Activated naive CD4-positive, alpha-beta T cell treated with anti-CD3 and anti-CD28 coated beads for 36 hours (primary cell): ENCODE measurements at regions of chr1 and their contacts with region 1.

Region 1: DNA sequence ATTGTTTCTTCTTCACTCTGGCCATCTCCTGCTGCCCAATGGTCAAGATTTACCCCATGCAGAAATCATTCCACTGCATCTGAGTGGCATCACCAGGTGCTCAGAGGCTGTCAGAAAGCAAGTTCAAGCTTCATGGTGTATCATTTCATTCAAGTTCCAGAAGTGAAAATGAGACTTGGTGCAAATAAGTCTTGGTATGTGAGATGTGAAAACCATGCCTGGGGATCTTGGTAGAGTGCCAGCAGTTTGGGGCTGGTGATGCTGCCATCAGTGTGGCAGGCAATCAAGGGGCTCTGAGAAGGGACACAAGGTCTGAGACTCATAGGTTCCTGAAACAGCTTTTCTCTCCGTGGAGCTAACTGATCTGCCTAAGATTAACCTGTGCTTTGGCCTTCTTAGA is 52.0 kb downstream of the CD2 start:
- DNase-seq: peak; percentile 91
- H3K4me3 Mint-ChIP-seq: peak overlapping the region; percentile 86
- H3K27ac Mint-ChIP-seq: peak overlapping the region; percentile 97
- H3K4me1 Mint-ChIP-seq: peaks cover 90% of the 10 kb centered on the region
- H3K27me3 Mint-ChIP-seq: no peaks in the 10 kb centered on the region

Region 2: DNA sequence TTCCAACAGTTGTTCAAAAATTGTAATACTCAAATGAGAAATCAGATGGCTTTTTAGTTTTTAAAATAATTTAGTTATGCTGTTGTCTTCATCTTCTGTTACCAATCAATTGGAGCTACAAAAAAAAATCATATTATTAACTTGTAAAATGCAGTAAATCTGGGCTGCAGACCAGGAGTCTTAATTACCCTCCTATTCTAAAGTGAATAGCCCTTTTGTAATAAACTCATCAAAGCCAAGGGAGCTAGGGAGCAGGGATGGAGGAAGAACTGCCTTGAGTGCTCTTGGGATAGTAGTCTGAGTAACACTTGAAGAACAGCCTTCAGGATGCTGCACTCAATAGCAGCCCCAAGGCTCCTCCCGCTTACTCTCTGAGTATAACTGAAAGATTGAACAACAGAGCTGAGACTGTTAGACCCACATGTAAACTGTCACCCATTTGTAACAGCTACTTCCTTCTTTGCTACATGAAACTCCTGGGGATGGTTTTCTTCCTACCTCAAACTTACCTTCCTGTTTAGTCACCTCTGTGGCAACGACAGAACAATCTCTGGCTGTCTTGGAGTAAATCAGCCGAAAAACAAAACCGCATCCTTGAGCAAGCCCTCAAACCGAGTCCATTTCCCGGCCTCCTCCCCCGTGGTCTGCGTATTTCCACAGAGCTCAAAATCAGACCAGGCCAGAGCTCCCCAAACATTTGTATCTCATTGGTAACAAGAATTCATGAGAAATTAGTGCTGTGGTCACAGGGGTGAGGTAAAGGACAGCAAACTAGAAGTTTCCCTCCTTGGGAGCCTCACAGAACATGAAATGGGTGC is 291.3 kb before region 1 on chr1:
- CTCF ChIA-PET with region 1: no interaction called
- intact Hi-C with region 1: no loop called
- DNase-seq: peak; percentile 73
- H3K4me3 Mint-ChIP-seq: no peak overlapping the region
- H3K27ac Mint-ChIP-seq: peak overlapping the region; percentile 76
- H3K4me1 Mint-ChIP-seq: peaks cover 33% of the 10 kb centered on the region
- H3K27me3 Mint-ChIP-seq: no peaks in the 10 kb centered on the region

Region 3: DNA sequence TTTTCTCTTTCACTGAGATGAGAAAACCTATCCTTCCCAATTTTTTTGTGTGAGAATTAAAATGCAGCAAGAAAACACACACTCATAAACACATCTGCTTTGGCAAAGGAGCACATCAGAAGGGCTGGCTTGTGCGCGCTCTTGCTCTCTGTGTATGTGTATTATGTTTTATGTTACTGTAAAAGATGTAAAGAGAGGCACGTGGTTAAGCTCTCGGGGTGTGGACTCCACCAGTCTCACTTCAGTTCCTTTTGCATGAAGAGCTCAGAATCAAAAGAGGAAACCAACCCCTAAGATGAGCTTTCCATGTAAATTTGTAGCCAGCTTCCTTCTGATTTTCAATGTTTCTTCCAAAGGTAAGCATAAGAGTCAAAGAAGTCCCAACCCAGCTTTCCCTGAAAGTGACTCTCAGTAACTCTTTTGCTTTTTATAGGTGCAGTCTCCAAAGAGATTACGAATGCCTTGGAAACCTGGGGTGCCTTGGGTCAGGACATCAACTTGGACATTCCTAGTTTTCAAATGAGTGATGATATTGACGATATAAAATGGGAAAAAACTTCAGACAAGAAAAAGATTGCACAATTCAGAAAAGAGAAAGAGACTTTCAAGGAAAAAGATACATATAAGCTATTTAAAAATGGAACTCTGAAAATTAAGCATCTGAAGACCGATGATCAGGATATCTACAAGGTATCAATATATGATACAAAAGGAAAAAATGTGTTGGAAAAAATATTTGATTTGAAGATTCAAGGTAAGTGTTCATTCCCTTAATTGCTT is 51.9 kb before region 1 on chr1 and contains the start of gene CD2:
- CTCF ChIA-PET with region 1: interaction called, 12 read pairs
- intact Hi-C with region 1: no loop called
- DNase-seq: peak; percentile 81
- H3K4me3 Mint-ChIP-seq: peak within 1 kb of the TSS; percentile 100
- H3K27ac Mint-ChIP-seq: peak within 1 kb of the TSS; percentile 100
- H3K4me1 Mint-ChIP-seq: peaks cover 28% of the 10 kb centered on the region
- H3K27me3 Mint-ChIP-seq: no peaks in the 10 kb centered on the region
- total RNA-seq, gene CD2: 251 to 264 TPM

Region 4: GRCh38 chr1:116763787-116764465 is 42.3 kb before region 1 on chr1:
- CTCF ChIA-PET with region 1: interaction called, 44 read pairs
- intact Hi-C with region 1: loop called (anchors 1 kb)
- DNase-seq: peak; percentile 68
- H3K4me3 Mint-ChIP-seq: peak overlapping the region; percentile 100
- H3K27ac Mint-ChIP-seq: peak overlapping the region; percentile 100
- H3K4me1 Mint-ChIP-seq: peaks cover 87% of the 10 kb centered on the region
- H3K27me3 Mint-ChIP-seq: no peaks in the 10 kb centered on the region

Region 5: GRCh38 chr1:116777831-116778830 is 28.1 kb before region 1 on chr1:
- CTCF ChIA-PET with region 1: interaction called, 44 read pairs
- intact Hi-C with region 1: loop called (anchors 1 kb)
- DNase-seq: no peak
- H3K4me3 Mint-ChIP-seq: peak overlapping the region; percentile 49
- H3K27ac Mint-ChIP-seq: peak overlapping the region; percentile 80
- H3K4me1 Mint-ChIP-seq: peaks cover 38% of the 10 kb centered on the region
- H3K27me3 Mint-ChIP-seq: no peaks in the 10 kb centered on the region

Region 6: DNA sequence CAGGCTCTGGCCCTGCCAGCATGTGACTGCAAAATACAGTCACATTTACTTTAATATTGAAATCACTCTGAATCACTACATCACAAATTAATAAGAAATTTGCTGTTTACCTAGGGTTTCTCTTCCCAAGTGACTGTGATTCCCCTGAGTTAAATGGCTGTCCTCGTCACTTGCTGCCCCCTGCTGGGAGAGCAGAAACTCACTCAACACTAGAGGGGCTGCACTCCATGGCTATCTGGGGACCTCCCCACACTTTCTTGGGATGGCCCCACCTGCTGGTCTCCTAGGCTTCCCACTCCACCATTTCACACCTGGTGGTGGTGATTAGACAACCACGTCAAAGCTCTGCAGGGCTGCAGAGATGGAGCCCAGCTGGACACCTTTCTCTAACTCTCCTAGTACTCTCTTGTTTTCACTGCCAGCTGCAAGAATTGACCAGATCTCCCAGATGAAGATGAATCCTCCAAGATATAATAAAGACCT is 11.4 kb after region 1 on chr1:
- CTCF ChIA-PET with region 1: interaction called, 20 read pairs
- intact Hi-C with region 1: loop called (anchors 1 kb)
- DNase-seq: peak; percentile 91
- H3K4me3 Mint-ChIP-seq: no peak overlapping the region
- H3K27ac Mint-ChIP-seq: peak overlapping the region; percentile 98
- H3K4me1 Mint-ChIP-seq: peaks cover 66% of the 10 kb centered on the region
- H3K27me3 Mint-ChIP-seq: no peaks in the 10 kb centered on the region

Region 7: DNA sequence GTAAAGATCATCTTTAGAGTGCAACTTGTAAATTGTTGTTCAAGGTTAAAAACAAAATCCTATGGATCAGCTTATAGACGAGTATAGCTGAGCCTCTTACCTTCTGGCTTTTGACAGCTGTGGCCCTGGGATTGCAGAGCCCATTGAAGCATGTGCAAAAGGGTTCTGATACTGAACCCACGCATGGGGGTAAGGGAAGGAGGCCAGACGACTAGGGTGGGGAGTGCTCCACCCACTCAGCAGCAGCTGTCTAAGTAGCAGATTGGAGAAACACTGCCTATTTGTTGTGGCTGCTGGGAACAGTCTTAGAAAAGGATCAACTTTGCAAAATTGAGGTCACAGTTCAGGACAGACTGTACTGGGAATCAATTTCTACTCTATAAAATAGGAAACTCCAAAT is 211.4 kb after region 1 on chr1:
- CTCF ChIA-PET with region 1: no interaction called
- intact Hi-C with region 1: no loop called
- DNase-seq: no peak
- H3K4me3 Mint-ChIP-seq: no peak overlapping the region
- H3K27ac Mint-ChIP-seq: no peak overlapping the region
- H3K4me1 Mint-ChIP-seq: peaks cover 32% of the 10 kb centered on the region
- H3K27me3 Mint-ChIP-seq: no peaks in the 10 kb centered on the region